ENCODE measurements at regions of chr3 and their contacts with region 1.

Region 1: DNA sequence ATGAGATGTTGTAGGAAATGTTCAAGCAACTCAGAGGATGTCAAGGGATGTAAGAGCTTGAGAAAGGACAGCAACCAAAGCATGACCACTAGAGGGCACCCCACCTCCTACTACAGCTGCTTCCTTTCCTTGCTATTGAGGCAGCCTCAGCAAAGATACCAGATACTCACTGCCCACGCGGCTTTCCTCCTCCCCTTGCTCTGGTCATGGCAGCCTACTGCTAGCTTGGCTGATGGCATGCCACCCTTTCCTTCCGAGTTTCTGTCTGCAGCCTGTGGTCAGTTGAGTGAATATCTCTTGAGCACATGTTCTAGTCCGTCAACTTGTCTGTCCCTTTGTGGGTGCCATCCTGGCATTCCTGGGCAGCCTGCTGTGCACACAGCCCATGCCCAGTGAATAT is 4.4 kb upstream of the CXCR6 start:
- DNase-seq: peak; percentile 79 to 83 (median 80)
- H3K4me3 ChIP-seq: no peak overlapping the region
- H3K4me3 Mint-ChIP-seq: peak overlapping the region in 1 of 8 donors; percentile 14
- H3K27ac ChIP-seq: no peak overlapping the region
- H3K27ac Mint-ChIP-seq: peak overlapping the region in 3 of 7 donors; percentile 16 to 82 (median 77)
- H3K4me1 ChIP-seq: peaks cover 43% of the 10 kb centered on the region
- H3K4me1 Mint-ChIP-seq: peaks cover 27 to 52% (median 42%) of the 10 kb centered on the region in 4 donors
- H3K27me3 ChIP-seq: no peaks in the 10 kb centered on the region
- H3K27me3 Mint-ChIP-seq: no peaks in the 10 kb centered on the region

Region 2: GRCh38 chr3:45958321-45958791 is 19.5 kb after region 1 on chr3:
- CTCF ChIA-PET with region 1: interaction called, 153 read pairs
- POLR2A ChIA-PET with region 1: interaction called, 90 read pairs
- intact Hi-C with region 1: no loop called
- DNase-seq: no peak
- H3K4me3 ChIP-seq: no peak overlapping the region
- H3K4me3 Mint-ChIP-seq: peak overlapping the region in 1 of 8 donors; percentile 25
- H3K27ac ChIP-seq: peak overlapping the region; percentile 4
- H3K27ac Mint-ChIP-seq: peak overlapping the region in 4 of 7 donors; percentile 3 to 66 (median 26)
- H3K4me1 ChIP-seq: peaks cover 25% of the 10 kb centered on the region
- H3K4me1 Mint-ChIP-seq: peaks cover 8 to 55% (median 33%) of the 10 kb centered on the region in 4 donors
- H3K27me3 ChIP-seq: no peaks in the 10 kb centered on the region
- H3K27me3 Mint-ChIP-seq: no peaks in the 10 kb centered on the region

Region 3: GRCh38 chr3:45972534-45973402 is 33.9 kb after region 1 on chr3:
- CTCF ChIA-PET with region 1: interaction called, 153 read pairs
- POLR2A ChIA-PET with region 1: interaction called, 90 read pairs
- intact Hi-C with region 1: loop called (anchors 5 kb)
- DNase-seq: no peak
- H3K4me3 ChIP-seq: no peak overlapping the region
- H3K4me3 Mint-ChIP-seq: peak overlapping the region in 4 of 8 donors; percentile 20 to 54 (median 28)
- H3K27ac ChIP-seq: no peak overlapping the region
- H3K27ac Mint-ChIP-seq: peak overlapping the region; percentile 63 to 90 (median 75)
- H3K4me1 ChIP-seq: peaks cover 75% of the 10 kb centered on the region
- H3K4me1 Mint-ChIP-seq: peaks cover 40 to 91% (median 66%) of the 10 kb centered on the region in 4 donors
- H3K27me3 ChIP-seq: no peaks in the 10 kb centered on the region
- H3K27me3 Mint-ChIP-seq: no peaks in the 10 kb centered on the region

Region 4: GRCh38 chr3:45995236-45996192 is 56.6 kb after region 1 on chr3 and contains the start of gene FYCO1:
- CTCF ChIA-PET with region 1: interaction called, 8 read pairs
- POLR2A ChIA-PET with region 1: interaction called, 195 read pairs
- intact Hi-C with region 1: loop called (anchors 2 kb)
- DNase-seq: peak; percentile 84 to 88 (median 85)
- H3K4me3 ChIP-seq: peak within 1 kb of the TSS; percentile 75 to 93
- H3K4me3 Mint-ChIP-seq: peak within 1 kb of the TSS; percentile 83 to 95 (median 92)
- H3K27ac ChIP-seq: peak within 1 kb of the TSS; percentile 95
- H3K27ac Mint-ChIP-seq: peak within 1 kb of the TSS; percentile 88 to 95 (median 94)
- H3K4me1 ChIP-seq: peaks cover 47% of the 10 kb centered on the region
- H3K4me1 Mint-ChIP-seq: peaks cover 32 to 59% (median 37%) of the 10 kb centered on the region in 4 donors
- H3K27me3 ChIP-seq: no peaks in the 10 kb centered on the region
- H3K27me3 Mint-ChIP-seq: no peaks in the 10 kb centered on the region
- total RNA-seq, gene FYCO1: 42.5 to 43.3 TPM

Region 5: DNA sequence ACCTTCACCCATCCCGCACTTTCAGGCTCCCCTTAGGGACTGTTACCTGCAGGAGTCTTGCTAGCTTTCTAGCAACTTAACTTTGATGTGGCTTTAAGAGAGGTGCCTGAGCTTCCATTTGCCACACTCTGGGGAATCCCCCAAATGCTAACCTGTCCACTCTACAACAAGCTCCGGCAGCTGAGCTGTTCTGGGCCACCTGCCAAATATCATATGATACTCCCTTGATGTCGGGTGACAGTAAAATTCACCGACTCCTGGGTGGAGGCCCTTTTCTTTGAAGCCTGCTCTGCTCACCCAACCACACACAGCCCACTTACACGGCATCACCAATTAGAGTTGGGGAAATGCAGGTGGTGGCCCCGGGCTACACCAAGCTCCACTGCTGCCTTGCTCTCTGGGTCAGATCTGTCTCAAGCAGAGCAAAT is 126.4 kb after region 1 on chr3:
- CTCF ChIA-PET with region 1: interaction called, 22 read pairs
- POLR2A ChIA-PET with region 1: interaction called, 36 read pairs
- intact Hi-C with region 1: loop called (anchors 2 kb)
- DNase-seq: peak; percentile 88 to 99 (median 93)
- H3K4me3 ChIP-seq: no peak overlapping the region
- H3K4me3 Mint-ChIP-seq: peak overlapping the region; percentile 58 to 86 (median 78)
- H3K27ac ChIP-seq: peak overlapping the region; percentile 47
- H3K27ac Mint-ChIP-seq: peak overlapping the region; percentile 86 to 96 (median 94)
- H3K4me1 ChIP-seq: peaks cover 77% of the 10 kb centered on the region
- H3K4me1 Mint-ChIP-seq: peaks cover 52 to 88% (median 68%) of the 10 kb centered on the region in 4 donors
- H3K27me3 ChIP-seq: no peaks in the 10 kb centered on the region
- H3K27me3 Mint-ChIP-seq: no peaks in the 10 kb centered on the region

Region 6: GRCh38 chr3:46378426-46378942 is 439.6 kb after region 1 on chr3:
- CTCF ChIA-PET with region 1: interaction called, 7 read pairs
- POLR2A ChIA-PET with region 1: no interaction called
- intact Hi-C with region 1: loop called (anchors 2 kb)
- DNase-seq: peak; percentile 49 to 55 (median 49)
- H3K4me3 ChIP-seq: no peak overlapping the region
- H3K4me3 Mint-ChIP-seq: peak overlapping the region in 1 of 8 donors; percentile 9
- H3K27ac ChIP-seq: no peak overlapping the region
- H3K27ac Mint-ChIP-seq: peak overlapping the region in 4 of 7 donors; percentile 17 to 55 (median 34)
- H3K4me1 ChIP-seq: peaks cover 52% of the 10 kb centered on the region
- H3K4me1 Mint-ChIP-seq: peaks cover 36 to 74% (median 53%) of the 10 kb centered on the region in 4 donors
- H3K27me3 ChIP-seq: no peaks in the 10 kb centered on the region
- H3K27me3 Mint-ChIP-seq: no peaks in the 10 kb centered on the region